Heart right ventricle (tissue), 16 donors: ENCODE measurements at regions of chr13 and their contacts with region 1.

Region 1: DNA sequence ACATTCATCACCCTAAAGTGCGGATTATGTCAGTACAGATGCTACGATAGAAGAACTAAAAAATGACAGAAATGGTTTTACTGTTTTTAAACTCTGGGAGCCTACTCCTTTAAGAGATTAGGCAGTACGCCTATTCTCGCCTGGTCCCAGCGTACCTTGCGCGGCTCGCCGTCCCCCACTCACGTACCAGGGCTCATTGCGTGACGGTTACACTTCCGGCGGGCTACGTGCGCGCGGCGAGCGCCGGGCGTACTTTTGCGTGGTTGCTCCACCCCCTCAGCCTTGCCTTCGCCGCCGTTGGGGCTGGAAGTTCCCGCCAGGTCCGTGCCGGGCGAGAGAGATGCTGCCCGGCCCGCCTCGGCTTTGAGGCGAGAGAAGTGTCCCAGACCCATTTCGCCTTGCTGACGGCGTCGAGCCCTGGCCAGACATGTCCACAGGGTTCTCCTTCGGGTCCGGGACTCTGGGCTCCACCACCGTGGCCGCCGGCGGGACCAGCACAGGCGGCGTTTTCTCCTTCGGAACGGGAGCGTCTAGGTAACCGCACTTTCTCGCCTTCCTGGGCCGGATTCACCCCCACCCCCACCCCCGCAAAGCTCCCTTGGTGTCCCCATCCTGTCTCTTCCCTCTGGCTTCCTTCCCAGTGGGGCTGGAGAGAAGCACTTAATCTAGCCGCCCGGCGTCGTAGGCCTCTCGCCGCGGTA is at the start of gene NUP58:
- DNase-seq: peak; percentile 95
- ATAC-seq: peak; percentile 100
- H3K4me3 ChIP-seq: peak within 1 kb of the TSS; percentile 64 to 94 (median 80)
- H3K27ac ChIP-seq: peak within 1 kb of the TSS; percentile 31 to 95 (median 90)
- H3K4me1 ChIP-seq: peaks cover 0 to 38% (median 20%) of the 10 kb centered on the region in 9 donors
- H3K27me3 ChIP-seq: peaks cover 0 to 13% (median 5%) of the 10 kb centered on the region in 7 donors
- CTCF ChIP-seq: no peak
- total RNA-seq, gene NUP58: 21.2 to 29.5 (median 26.5) TPM

Region 2: GRCh38 chr13:24270639-24271141 is 1030.8 kb before region 1 on chr13:
- intact Hi-C with region 1: no loop called
- DNase-seq: peak; percentile 68
- ATAC-seq: peak; percentile 48 to 85 (median 76)
- H3K4me3 ChIP-seq: peak overlapping the region in 9 of 10 donors; percentile 30 to 58 (median 50)
- H3K27ac ChIP-seq: peak overlapping the region; percentile 14 to 94 (median 89)
- H3K4me1 ChIP-seq: peaks cover 4 to 79% (median 69%) of the 10 kb centered on the region in 9 donors
- H3K27me3 ChIP-seq: no peaks in the 10 kb centered on the region
- CTCF ChIP-seq: peak in 1 of 9 donors; percentile 3

Region 3: GRCh38 chr13:25214491-25215252 is 86.8 kb before region 1 on chr13:
- intact Hi-C with region 1: no loop called
- DNase-seq: peak; percentile 15 to 16
- ATAC-seq: peak in 7 of 8 donors; percentile 30 to 73 (median 69)
- H3K4me3 ChIP-seq: no peak overlapping the region
- H3K27ac ChIP-seq: peak overlapping the region in 1 of 10 donors; percentile 30
- H3K4me1 ChIP-seq: peaks cover 0 to 7% (median 0%) of the 10 kb centered on the region in 9 donors
- H3K27me3 ChIP-seq: peaks cover 0 to 6% (median 0%) of the 10 kb centered on the region in 7 donors
- CTCF ChIP-seq: no peak

Region 4: DNA sequence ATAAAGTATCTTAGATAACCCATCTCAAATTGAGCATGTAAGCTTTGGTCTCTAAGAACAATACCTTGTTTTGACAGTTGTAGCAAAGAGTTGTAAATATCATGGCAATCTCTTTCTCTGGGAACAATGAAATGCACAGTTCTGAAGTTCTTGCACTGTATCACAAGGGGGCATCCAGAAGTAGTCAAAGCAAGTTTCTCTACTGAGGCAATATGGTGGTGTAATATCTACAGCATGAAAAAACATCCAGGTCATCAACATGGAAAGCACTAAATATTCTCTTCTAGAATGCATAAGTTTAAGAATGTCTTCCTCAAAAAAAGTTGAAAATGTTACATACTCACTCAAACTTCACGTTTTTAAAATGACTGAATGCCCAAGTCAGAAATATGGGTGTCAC is 33.8 kb before region 1 on chr13:
- intact Hi-C with region 1: no loop called
- DNase-seq: no peak
- ATAC-seq: no peak
- H3K4me3 ChIP-seq: no peak overlapping the region
- H3K27ac ChIP-seq: no peak overlapping the region
- H3K4me1 ChIP-seq: no peaks in the 10 kb centered on the region
- H3K27me3 ChIP-seq: no peaks in the 10 kb centered on the region
- CTCF ChIP-seq: peak in 2 of 9 donors; percentile 15 to 32

Region 5: DNA sequence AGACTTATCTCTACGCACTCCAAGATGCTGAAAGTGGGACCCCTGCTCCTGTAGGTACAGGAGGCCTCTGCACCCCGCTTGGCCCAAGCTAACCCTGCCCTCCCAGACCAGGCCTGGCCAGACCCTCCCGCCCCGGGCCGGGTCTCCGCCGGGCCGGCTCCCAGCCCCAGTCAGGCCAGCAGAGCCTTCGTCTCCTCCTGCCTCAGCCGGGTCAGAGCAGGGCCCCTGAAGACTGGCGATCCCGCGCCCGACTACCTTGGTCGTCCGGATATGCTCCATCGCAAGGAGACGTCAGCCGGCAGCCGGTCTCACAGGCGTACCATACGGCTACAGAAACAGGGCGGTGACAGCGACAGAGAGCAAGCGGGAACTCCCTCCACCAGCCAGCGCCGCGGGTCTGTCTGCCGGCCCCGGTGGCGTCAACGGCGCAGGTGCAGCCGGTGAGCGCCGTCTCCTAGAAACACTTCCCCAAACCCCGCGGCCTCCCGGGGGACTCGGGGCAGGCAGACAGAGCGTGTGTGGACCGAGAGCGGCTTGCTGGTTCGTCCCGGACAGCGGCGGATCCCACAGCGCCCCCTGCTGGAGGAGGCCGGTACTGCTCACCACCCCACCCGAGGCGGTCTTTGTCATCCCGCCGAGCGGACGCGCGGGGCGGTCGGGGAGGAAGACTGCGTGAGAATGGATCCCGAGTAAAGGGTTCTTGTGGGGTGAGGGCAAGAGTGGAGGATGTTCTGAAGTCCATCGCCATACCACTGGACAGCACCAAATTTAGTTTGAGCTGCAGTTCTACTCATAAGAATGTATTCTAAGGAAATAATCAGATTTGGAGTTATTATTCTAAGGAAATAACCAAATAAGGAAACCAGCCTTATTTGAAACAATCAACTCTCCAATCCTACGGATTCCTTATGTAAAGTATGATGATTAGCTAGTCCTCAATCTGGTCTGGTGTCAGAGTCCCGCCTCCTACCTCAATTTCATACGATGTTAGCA is 14.2 kb before region 1 on chr13 and contains the start of gene MTMR6:
- intact Hi-C with region 1: loop called in 2 of 10 experiments (anchors 1 to 2 kb)
- DNase-seq: peak; percentile 93 to 95
- ATAC-seq: peak; percentile 97 to 99 (median 98)
- H3K4me3 ChIP-seq: peak within 1 kb of the TSS; percentile 68 to 99 (median 92)
- H3K27ac ChIP-seq: peak within 1 kb of the TSS; percentile 36 to 98 (median 89)
- H3K4me1 ChIP-seq: peaks cover 0 to 29% (median 15%) of the 10 kb centered on the region in 9 donors
- H3K27me3 ChIP-seq: peaks cover 0 to 19% (median 0%) of the 10 kb centered on the region in 7 donors
- CTCF ChIP-seq: peak; percentile 99 to 100 (median 100)
- total RNA-seq, gene MTMR6: 15.3 to 19.5 (median 17.9) TPM

Region 6: GRCh38 chr13:25319771-25320170 is 18.3 kb after region 1 on chr13:
- intact Hi-C with region 1: no loop called
- DNase-seq: no peak
- ATAC-seq: no peak
- H3K4me3 ChIP-seq: no peak overlapping the region
- H3K27ac ChIP-seq: peak overlapping the region in 1 of 10 donors; percentile 13
- H3K4me1 ChIP-seq: peaks cover 0 to 4% (median 0%) of the 10 kb centered on the region in 9 donors
- H3K27me3 ChIP-seq: no peaks in the 10 kb centered on the region
- CTCF ChIP-seq: no peak